ENCODE measurements at regions of chr7 and their contacts with region 1.

Region 1: DNA sequence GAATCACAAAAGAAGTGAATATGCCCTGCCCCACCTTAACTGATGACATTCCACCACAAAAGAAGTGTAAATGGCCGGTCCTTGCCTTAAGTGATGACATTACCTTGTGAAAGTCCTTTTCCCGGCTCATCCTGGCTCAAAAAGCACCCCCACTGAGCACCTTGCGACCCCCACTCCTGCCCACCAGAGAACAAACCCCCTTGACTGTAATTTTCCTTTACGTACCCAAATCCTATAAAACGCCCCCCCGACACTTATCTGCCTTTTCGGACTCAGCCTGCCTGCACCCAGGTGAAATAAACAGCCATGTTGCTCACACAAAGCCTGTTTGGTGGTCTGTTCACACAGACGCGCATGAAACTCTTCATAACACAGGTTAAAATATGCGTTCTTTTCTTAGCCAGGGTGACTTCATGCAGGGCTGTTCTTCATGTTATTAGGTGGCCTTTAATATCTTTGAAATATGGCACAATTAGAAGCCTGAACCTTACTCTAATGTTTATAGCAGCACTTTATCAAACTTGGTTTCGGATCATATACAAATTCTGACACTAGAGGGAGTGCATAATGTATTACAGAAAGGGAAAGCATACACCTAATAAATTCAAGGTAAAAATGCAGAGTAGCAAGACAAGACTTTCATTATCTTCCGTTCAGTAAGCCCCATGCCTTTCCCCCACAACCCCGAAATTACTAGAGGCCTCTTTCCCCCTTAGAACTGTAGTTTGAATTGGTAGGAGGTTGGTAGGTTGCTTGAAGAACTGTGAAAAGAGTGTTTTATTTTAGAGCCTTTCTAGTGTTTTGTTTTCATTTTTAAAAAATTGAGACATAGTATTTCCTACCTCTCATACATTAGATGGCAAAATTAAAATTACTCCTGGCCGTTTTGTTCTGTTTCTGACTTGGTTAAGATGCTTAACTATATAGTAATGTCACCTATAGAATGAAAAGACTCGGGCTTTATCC is 117.9 kb downstream of the NPY start:
- DNase-seq: peak; percentile 28
- ATAC-seq: peak; percentile 78
- H3K4me3 ChIP-seq: no peak overlapping the region; a peak in 1 of 4 replicates
- H3K27ac ChIP-seq: no peak overlapping the region
- H3K4me1 ChIP-seq: peaks cover 0 to 4% of the 10 kb centered on the region in 2 experiments; a peak in 2 of 4 replicates
- H3K27me3 ChIP-seq: no peaks in the 10 kb centered on the region
- CTCF ChIP-seq: peak; percentile 46 to 66 (median 57)
- POLR2A ChIP-seq: no peak
- RAD21 ChIP-seq: peak; percentile 68

Region 2: DNA sequence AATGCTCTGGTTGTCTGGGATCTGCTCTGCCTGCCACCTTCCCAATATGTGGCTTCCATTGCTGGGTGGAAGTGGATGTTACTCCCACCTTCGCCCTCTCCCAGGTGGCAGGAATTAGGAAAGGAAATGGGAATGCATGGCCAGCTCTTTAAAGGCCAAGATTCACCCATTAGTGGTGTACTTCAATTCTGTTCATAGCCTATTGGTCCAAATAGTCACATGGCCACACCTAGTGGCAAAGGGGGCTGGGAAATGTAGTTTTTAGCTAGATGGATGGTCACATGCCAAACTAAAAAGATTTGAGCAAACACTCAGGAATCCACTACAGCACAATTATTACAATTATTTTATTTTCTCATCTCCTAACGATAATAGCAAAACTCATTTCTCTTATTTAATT is 17.2 kb after region 1 on chr7:
- CTCF ChIA-PET with region 1: no interaction called
- POLR2A ChIA-PET with region 1: no interaction called
- RAD21 ChIA-PET with region 1: no interaction called
- intact Hi-C with region 1: no loop called
- DNase-seq: peak; percentile 21
- ATAC-seq: peak; percentile 80
- H3K4me3 ChIP-seq: no peak overlapping the region
- H3K27ac ChIP-seq: no peak overlapping the region
- H3K4me1 ChIP-seq: no peaks in the 10 kb centered on the region
- H3K27me3 ChIP-seq: no peaks in the 10 kb centered on the region
- CTCF ChIP-seq: no peak
- POLR2A ChIP-seq: no peak
- RAD21 ChIP-seq: no peak

Region 3: GRCh38 chr7:24587848-24588247 is 185.9 kb after region 1 on chr7:
- CTCF ChIA-PET with region 1: no interaction called
- POLR2A ChIA-PET with region 1: no interaction called
- RAD21 ChIA-PET with region 1: no interaction called
- intact Hi-C with region 1: loop called (anchors 5 kb)
- DNase-seq: no peak
- ATAC-seq: peak; percentile 85
- H3K4me3 ChIP-seq: no peak overlapping the region
- H3K27ac ChIP-seq: no peak overlapping the region
- H3K4me1 ChIP-seq: no peaks in the 10 kb centered on the region
- H3K27me3 ChIP-seq: no peaks in the 10 kb centered on the region
- CTCF ChIP-seq: peak; percentile 60 to 79 (median 62)
- POLR2A ChIP-seq: no peak
- RAD21 ChIP-seq: peak; percentile 72

Region 4: GRCh38 chr7:24665564-24666294 is 263.8 kb after region 1 on chr7:
- CTCF ChIA-PET with region 1: interaction called, 4 read pairs
- POLR2A ChIA-PET with region 1: no interaction called
- RAD21 ChIA-PET with region 1: no interaction called
- intact Hi-C with region 1: loop called (anchors 1 kb)
- DNase-seq: peak; percentile 27
- ATAC-seq: peak; percentile 78
- H3K4me3 ChIP-seq: no peak overlapping the region
- H3K27ac ChIP-seq: no peak overlapping the region
- H3K4me1 ChIP-seq: 0 out of 4 replicates have a peak, but pooled peaks cover 0 to 7% of the 10 kb centered on the region in 2 experiments
- H3K27me3 ChIP-seq: no peaks in the 10 kb centered on the region
- CTCF ChIP-seq: peak; percentile 57 to 78 (median 58); a peak in 5 of 6 replicates
- POLR2A ChIP-seq: no peak
- RAD21 ChIP-seq: peak; percentile 76

Region 5: DNA sequence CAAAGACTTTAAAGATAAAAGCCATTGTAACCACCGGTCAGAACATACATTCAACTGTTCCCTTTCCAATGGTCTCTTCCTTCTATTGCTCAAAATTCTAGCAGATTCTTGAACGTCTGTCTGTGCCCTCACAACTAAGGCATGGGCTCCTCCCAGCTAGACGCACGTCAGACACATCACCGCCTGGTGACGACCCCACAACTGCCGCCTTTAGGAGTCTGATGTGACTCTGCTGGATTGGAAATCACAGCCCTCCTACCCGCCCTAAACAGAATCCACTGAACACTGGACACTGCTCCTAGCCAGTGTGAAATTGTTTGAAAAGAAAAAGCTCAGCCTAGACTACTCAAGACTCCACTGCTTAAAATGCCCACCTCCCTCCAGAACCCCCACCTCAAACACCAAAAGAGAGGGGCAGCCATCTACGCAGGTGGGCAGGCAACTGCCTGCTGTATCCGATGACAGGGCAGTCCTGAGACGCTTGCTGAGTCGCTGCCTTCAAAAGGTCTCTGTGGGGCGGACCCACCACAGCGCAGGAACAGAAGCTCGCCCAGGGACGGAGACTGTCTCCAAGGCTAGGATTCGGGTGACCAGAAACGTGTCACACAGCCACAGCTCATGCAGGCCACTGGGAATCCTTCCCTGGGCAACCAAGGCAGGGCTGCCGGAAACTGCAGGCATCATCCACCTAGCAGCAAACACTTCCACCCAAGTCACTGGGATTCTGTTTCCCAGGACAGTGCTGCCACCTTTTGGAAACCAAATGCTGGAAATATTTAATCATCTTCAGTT is 320.7 kb after region 1 on chr7:
- CTCF ChIA-PET with region 1: no interaction called
- POLR2A ChIA-PET with region 1: no interaction called
- RAD21 ChIA-PET with region 1: no interaction called
- intact Hi-C with region 1: loop called (anchors 5 kb)
- DNase-seq: no peak
- ATAC-seq: peak; percentile 72
- H3K4me3 ChIP-seq: no peak overlapping the region
- H3K27ac ChIP-seq: no peak overlapping the region
- H3K4me1 ChIP-seq: peaks cover 10 to 12% of the 10 kb centered on the region in 2 experiments
- H3K27me3 ChIP-seq: no peaks in the 10 kb centered on the region
- CTCF ChIP-seq: peak; percentile 7 to 47 (median 44); a peak in 3 of 6 replicates
- POLR2A ChIP-seq: no peak
- RAD21 ChIP-seq: peak; percentile 73

Region 6: DNA sequence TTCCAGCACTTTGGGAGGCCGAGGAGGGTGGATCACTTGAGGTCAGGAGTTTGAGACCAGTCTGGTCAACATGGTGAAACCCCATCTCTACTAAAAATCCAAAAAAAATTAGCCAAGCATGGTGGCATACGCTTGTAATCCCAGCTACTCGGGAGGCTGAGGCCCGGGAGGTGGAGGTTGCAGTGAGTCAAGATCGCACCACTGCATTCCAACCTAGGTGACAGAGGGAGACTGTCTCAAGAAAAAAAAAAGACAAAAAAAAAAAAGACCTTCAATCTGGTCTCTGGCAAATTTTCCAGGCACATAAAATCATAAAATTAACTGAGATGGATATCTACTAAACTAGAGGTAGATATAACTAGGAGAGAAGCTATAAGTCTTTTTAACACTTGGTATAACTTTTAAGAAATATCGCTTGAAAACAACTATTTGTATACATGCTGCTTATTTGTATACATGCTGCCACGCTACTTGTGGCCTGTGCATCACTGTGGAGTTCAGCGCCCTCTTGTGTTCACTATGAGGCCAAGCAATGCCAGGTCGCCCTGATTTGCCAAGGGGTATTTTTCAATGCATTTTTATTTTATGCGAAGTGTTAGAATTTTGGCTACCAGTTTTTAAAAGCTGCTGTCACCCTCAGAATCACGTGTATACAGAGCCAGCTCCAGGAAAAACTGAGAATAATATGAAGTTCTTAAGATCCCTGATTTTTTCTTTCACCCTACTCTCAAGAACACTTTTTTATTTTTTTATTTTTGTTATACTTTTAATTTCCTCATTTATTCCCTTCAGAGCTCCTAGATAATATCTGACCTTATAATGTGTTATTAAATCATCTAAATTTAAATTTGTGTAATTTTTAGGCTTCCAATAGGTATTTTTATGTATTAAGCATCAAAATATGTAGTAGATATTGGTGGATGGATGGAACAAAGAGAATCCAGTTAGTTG is 696.5 kb after region 1 on chr7:
- CTCF ChIA-PET with region 1: no interaction called
- POLR2A ChIA-PET with region 1: no interaction called
- RAD21 ChIA-PET with region 1: no interaction called
- intact Hi-C with region 1: loop called (anchors 1 kb)
- DNase-seq: peak; percentile 70
- ATAC-seq: peak; percentile 80
- H3K4me3 ChIP-seq: no peak overlapping the region
- H3K27ac ChIP-seq: no peak overlapping the region
- H3K4me1 ChIP-seq: peaks cover 2 to 25% of the 10 kb centered on the region in 2 experiments; a peak in 3 of 4 replicates
- H3K27me3 ChIP-seq: no peaks in the 10 kb centered on the region
- CTCF ChIP-seq: peak; percentile 81 to 98 (median 87)
- POLR2A ChIP-seq: no peak
- RAD21 ChIP-seq: peak; percentile 93

Measured in HCT116 (cell line).